ENCODE measurements at regions of chr17 and their contacts with region 1.

Region 1: DNA sequence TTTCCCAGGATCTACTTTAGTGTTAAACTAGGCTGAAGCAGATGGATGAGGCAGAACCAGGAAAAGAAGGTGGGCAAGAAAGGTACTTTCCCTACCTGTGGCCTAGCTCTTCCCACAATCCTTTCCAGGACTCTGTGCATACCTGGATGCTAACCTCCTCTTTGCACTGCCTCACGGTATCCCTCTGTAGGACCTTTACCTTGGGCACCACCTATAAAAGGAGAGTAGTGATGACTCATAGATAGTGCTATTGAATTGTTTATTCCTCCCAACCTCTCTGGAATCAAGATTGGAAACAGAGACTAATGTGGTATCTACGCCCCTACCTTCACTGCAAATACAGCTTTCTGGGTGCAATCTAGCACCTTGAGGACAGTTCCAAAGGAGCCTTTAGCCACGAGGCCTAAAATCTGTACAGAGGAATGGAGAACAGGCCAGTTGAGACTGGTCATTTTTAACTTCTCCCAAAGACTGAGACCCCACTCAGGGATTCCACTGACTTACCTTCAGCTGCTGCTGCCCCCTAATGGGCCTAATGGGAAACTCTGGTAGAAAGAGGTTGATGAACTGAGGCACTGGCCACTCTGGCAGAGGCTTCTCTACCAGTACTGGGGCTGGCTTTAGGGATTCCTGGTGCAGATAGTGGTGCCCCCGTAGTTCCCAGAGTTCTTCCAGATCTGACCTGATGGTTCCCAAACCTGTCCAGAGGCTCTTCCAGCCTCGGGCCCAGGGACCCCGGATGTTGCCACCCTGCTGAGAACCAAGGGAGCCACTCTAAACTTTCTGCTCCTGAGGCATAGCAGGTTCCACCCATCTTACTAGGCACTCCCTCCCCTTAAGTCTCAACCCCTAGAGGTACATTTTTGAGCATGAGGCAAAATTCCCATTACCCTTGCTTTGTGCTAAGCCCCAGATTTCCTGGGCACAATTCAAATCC is 781 bp downstream of the RSKR start:
- DNase-seq: no peak
- H3K4me3 ChIP-seq: no peak overlapping the region
- H3K27ac ChIP-seq: no peak overlapping the region
- H3K4me1 ChIP-seq: no peaks in the 10 kb centered on the region
- H3K27me3 ChIP-seq: no peaks in the 10 kb centered on the region
- CTCF ChIP-seq: peak; percentile 55 to 73 (median 61)
- EP300 ChIP-seq: no peak
- POLR2A ChIP-seq: no peak

Region 2: DNA sequence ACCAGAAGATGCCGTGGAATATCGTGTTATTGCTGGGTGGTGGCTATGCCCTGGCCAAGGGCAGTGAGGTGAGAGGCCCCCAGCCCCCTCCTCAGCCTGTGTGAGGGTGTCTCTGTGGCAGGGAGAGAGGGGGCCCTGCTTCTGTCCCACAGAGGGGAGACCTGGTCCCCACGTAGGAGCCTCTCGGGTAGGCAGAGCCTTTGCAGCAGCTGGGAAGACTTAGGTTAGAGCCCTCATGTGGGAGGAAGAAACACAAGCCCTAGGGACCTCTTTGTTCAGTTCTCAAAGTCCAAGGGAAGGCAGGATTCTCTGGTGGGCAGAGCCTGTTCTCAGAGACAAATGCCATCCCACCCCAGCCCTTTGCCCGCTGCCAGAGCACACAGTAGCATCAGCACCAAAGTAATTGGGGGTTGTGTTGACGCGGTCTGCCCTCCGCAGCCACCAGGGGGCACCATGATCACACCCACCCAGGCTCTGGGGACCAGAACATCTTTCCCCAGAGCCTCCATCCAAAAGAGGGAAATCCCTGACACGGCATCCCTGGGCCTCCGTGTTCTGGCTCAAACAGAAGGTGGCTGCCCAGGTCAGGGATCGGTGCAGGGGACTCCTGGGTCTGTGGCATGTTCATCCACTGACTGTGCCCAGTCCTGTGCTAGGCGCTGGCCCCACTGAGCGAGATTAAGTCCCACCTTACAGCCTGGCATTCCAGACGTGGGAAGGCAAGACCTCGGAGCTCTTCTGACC is 118.6 kb before region 1 on chr17:
- intact Hi-C with region 1: loop called (anchors 2 kb)
- DNase-seq: peak; percentile 94
- H3K4me3 ChIP-seq: no peak overlapping the region
- H3K27ac ChIP-seq: no peak overlapping the region
- H3K4me1 ChIP-seq: no peaks in the 10 kb centered on the region
- H3K27me3 ChIP-seq: peaks cover 0 to 52% (median 2%) of the 10 kb centered on the region in 4 donors
- CTCF ChIP-seq: peak; percentile 76 to 87 (median 77)
- EP300 ChIP-seq: no peak
- POLR2A ChIP-seq: no peak

Region 3: DNA sequence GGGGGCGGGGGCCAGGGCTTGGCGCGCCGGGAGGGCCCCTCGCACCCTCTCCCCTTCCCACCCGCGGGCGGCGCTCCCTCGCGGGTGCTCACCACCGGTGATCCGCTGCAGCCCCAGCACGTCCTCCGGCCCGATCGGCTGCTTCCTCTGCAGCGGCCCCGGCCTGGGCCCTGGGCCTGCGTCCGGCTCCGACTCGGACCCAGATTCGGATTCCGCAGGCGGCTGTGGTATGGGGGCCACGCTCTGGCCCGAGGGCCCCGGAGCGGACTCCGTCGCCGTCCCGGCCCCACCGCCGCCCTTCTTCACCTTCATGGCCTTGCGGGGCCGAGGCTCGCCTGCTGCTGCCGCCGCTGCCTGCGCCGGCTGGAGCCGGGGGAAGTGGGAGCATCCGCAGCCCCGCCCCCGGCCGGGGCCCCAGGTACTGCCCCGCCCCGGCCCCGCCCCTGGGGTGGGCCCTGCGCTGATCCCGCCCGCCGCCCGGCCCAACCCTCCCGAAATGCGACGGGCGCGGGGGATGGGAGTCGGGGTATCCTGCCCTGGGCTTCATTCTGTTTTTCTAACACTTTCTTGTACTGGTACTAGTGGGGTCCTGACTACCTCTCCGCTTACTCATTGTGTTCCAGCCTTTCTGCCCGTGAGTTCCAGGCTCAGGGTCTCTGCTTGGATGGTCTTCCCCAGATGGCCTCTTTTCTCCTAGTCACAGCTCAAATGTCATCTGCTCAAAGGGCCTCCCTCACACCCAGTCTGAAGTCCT is 60.8 kb before region 1 on chr17 and contains the start of gene UNC119:
- intact Hi-C with region 1: loop called (anchors 5 kb)
- DNase-seq: no peak
- H3K4me3 ChIP-seq: peak within 1 kb of the TSS; percentile 77 to 91 (median 84)
- H3K27ac ChIP-seq: peak within 1 kb of the TSS; percentile 62 to 80 (median 78)
- H3K4me1 ChIP-seq: peaks cover 16 to 46% (median 35%) of the 10 kb centered on the region in 4 donors
- H3K27me3 ChIP-seq: no peaks in the 10 kb centered on the region
- CTCF ChIP-seq: no peak
- EP300 ChIP-seq: no peak
- POLR2A ChIP-seq: no peak
- total RNA-seq, gene UNC119: 16.1 to 36.3 (median 23.2) TPM